ENCODE measurements at regions of chr5 and their contacts with region 1.

Region 1: GRCh38 chr5:72302171-72302570 is 17.9 kb downstream of the MRPS27 start:
- DNase-seq: no peak
- ATAC-seq: no peak
- H3K4me3 ChIP-seq: no peak overlapping the region
- H3K27ac ChIP-seq: no peak overlapping the region; the same call in 1 of the 2 replicates
- H3K4me1 ChIP-seq: peaks cover 24% of the 10 kb centered on the region
- H3K27me3 ChIP-seq: no peaks in the 10 kb centered on the region
- CTCF ChIP-seq: no peak

Region 2: DNA sequence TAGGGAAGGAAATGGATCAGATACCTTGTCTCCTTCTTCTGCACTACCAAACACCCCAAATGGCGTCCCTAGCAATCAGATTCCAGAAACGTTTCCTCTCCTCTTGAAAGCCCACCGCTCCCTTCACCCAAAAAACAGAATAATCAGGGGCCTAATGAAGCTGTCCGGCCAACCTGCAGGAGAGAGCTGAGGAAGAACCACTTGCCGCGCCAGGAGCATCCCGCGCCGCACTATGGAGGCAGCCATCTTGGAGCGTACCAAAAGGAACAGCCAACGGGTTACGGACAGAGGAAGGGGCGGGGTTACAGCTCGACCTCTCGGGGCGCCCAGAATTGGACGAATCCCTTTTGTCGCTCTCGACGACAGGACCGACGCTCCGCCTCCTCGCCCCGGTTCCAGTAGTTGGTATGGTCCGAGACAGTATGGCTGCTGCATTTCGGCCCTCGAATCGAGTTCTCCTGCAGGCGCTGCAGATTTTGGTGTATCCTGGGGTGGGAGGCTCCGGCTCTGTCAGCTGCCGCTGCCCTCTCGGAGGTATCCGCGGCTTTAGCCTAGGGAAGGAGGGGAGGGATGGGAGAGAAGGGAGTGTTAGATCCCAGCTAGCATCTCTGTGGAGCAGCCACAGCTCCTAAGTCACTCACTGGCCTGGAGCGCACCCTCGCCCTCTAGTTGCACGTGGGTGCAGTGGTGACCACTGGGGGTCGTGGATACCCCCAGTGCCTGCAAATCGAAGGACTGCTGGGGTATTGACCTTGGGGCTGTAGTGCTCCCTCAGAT is 18.0 kb after region 1 on chr5 and contains the starts of genes MRPS27 and PTCD2:
- CTCF ChIA-PET with region 1: no interaction called
- POLR2A ChIA-PET with region 1: interaction called, 11 read pairs
- in situ Hi-C with region 1: no loop called
- intact Hi-C with region 1: no loop called
- DNase-seq: peak; percentile 90
- ATAC-seq: peak; percentile 100
- H3K4me3 ChIP-seq: peak within 1 kb of the TSS; percentile 97 to 99
- H3K27ac ChIP-seq: peak within 1 kb of the TSS; percentile 97
- H3K4me1 ChIP-seq: peaks cover 13% of the 10 kb centered on the region; the same call in 1 of the 2 replicates
- H3K27me3 ChIP-seq: no peaks in the 10 kb centered on the region
- CTCF ChIP-seq: no peak
- total RNA-seq, gene MRPS27: 67.2 TPM
- total RNA-seq, gene PTCD2: 13.0 TPM